ENCODE measurements at regions of chr10 and their contacts with region 1.

Region 1: GRCh38 chr10:23331567-23332290 is 12.9 kb downstream of the C10orf67 start:
- DNase-seq: peak; percentile 88
- H3K4me3 Mint-ChIP-seq: no peak overlapping the region
- H3K27ac Mint-ChIP-seq: peak overlapping the region; percentile 11
- H3K4me1 Mint-ChIP-seq: no peaks in the 10 kb centered on the region
- H3K27me3 Mint-ChIP-seq: no peaks in the 10 kb centered on the region
- CTCF ChIP-seq: no peak

Region 2: GRCh38 chr10:23383637-23384036 is 51.9 kb after region 1 on chr10:
- CTCF ChIA-PET with region 1: no interaction called
- POLR2A ChIA-PET with region 1: interaction called, 5 read pairs
- intact Hi-C with region 1: loop called (anchors 2 kb)
- DNase-seq: no peak
- H3K4me3 Mint-ChIP-seq: no peak overlapping the region
- H3K27ac Mint-ChIP-seq: peak overlapping the region; percentile 12
- H3K4me1 Mint-ChIP-seq: peaks cover 9% of the 10 kb centered on the region
- H3K27me3 Mint-ChIP-seq: no peaks in the 10 kb centered on the region
- CTCF ChIP-seq: no peak